PC-3 (cell line): ENCODE measurements at regions of chrX and their contacts with region 1.

Region 1: GRCh38 chrX:13180807-13181206 is 136.4 kb upstream of the FAM9C start:
- DNase-seq: peak; percentile 91
- ATAC-seq: peak; percentile 89
- H3K4me3 ChIP-seq: no peak overlapping the region
- H3K27ac ChIP-seq: peak overlapping the region; percentile 90
- H3K4me1 ChIP-seq: peaks cover 21% of the 10 kb centered on the region
- H3K27me3 ChIP-seq: no peaks in the 10 kb centered on the region
- CTCF ChIP-seq: no peak

Region 2: GRCh38 chrX:13005661-13006473 is 174.9 kb before region 1 on chrX:
- CTCF ChIA-PET with region 1: no interaction called
- POLR2A ChIA-PET with region 1: no interaction called
- intact Hi-C with region 1: loop called (anchors 5 kb)
- DNase-seq: no peak
- ATAC-seq: no peak
- H3K4me3 ChIP-seq: no peak overlapping the region
- H3K27ac ChIP-seq: peak overlapping the region; percentile 97
- H3K4me1 ChIP-seq: peaks cover 78% of the 10 kb centered on the region
- H3K27me3 ChIP-seq: no peaks in the 10 kb centered on the region
- CTCF ChIP-seq: no peak

Region 3: GRCh38 chrX:13287816-13288215 is 107.0 kb after region 1 on chrX:
- CTCF ChIA-PET with region 1: no interaction called
- POLR2A ChIA-PET with region 1: no interaction called
- intact Hi-C with region 1: no loop called
- DNase-seq: peak; percentile 5
- ATAC-seq: no peak
- H3K4me3 ChIP-seq: no peak overlapping the region
- H3K27ac ChIP-seq: no peak overlapping the region
- H3K4me1 ChIP-seq: peaks cover 8% of the 10 kb centered on the region; the same call in 1 of the 2 replicates
- H3K27me3 ChIP-seq: no peaks in the 10 kb centered on the region
- CTCF ChIP-seq: no peak